Ascending aorta (tissue), 2 donors: ENCODE measurements at regions of chr6 and their contacts with region 1.

Region 1: DNA sequence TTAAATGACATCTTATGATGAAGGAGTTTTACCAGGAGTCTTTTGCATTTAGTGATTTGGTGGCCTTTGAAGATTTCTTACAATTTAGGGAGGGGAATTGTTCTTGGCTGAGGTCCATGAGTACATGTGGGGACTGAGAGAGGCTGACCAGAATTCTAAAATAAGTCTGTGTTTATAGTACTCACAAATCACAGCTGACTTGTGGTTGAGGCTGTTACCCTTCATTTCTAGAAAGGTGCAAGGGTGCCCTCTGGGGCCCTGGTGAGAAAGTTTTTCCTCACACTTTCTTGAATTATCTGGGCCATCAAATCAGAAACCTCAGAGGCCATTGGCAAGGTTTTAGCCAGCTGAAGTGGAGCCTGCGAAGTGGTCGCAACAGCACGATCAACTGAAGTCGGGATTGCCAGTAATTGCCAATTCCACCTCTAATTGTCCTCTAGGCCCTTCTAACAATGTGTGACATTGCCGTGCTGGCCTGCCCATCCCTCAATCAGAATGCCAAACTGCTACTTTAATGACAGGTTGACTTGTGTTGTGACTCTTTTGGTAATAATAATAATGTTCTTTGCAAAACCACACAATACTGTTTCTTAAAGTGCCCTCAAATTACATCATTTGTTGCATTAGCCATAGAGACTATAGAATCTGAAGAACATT is 221.6 kb downstream of the OGFRL1 start:
- DNase-seq: peak in 1 of 2 donors; percentile 79
- H3K4me3 ChIP-seq: no peak overlapping the region
- H3K27ac ChIP-seq: peak overlapping the region in 1 of 2 donors; percentile 51
- H3K4me1 ChIP-seq: peaks cover 0 to 11% of the 10 kb centered on the region in 2 donors
- H3K27me3 ChIP-seq: no peaks in the 10 kb centered on the region
- CTCF ChIP-seq: peak; percentile 64 to 82 (median 81)

Region 2: GRCh38 chr6:71190809-71191208 is 319.4 kb before region 1 on chr6:
- intact Hi-C with region 1: loop called (anchors 2 kb)
- DNase-seq: no peak
- H3K4me3 ChIP-seq: no peak overlapping the region
- H3K27ac ChIP-seq: no peak overlapping the region
- H3K4me1 ChIP-seq: no peaks in the 10 kb centered on the region
- H3K27me3 ChIP-seq: no peaks in the 10 kb centered on the region
- CTCF ChIP-seq: peak in 1 of 3 experiments; percentile 28

Region 3: DNA sequence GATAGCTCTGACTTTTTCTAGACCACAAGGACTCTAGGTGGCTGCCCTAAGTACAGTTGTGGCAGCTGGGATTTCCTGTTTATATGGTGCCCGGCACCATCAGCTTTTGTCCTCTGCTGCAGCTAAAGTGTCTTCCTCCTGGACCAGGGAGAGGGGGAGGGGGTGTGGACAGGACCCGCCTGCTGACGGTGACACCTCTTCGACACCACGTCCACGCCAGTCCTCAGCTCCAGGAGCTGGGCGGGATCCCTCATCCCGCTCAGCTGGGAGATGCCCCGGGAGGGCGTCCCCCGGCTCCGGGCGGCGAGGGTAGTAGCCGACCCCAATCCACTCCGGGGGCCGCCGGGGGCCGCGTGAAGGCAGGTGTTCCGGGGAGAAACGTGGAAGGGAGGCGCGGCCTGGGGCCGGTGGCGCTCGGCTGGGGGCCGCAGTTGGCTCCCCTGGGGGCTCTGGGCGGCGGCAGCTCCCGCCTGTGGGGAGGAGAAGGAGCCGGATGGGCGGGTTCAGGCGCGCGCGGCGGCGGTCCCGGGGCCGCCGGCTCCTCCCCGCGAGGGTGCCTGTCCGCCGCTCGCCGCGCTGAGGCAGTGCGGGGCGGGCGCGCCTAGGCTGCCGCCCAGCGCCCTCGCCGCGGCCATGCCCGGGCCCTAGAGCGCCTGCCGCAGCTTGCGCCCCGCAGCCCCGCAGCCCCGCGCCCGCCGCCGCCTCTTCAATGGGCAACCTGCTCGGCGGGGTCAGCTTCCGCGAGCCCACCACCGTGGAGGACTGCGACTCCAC is 221.8 kb before region 1 on chr6 and contains the start of gene OGFRL1:
- intact Hi-C with region 1: loop called (anchors 5 kb)
- DNase-seq: peak; percentile 33 to 84
- H3K4me3 ChIP-seq: peak within 1 kb of the TSS; percentile 96 to 99
- H3K27ac ChIP-seq: peak within 1 kb of the TSS; percentile 95 to 98
- H3K4me1 ChIP-seq: peaks cover 0 to 13% of the 10 kb centered on the region in 2 donors
- H3K27me3 ChIP-seq: no peaks in the 10 kb centered on the region
- CTCF ChIP-seq: peak in 1 of 3 experiments; percentile 37
- total RNA-seq, gene OGFRL1: 14.6 TPM

Region 4: DNA sequence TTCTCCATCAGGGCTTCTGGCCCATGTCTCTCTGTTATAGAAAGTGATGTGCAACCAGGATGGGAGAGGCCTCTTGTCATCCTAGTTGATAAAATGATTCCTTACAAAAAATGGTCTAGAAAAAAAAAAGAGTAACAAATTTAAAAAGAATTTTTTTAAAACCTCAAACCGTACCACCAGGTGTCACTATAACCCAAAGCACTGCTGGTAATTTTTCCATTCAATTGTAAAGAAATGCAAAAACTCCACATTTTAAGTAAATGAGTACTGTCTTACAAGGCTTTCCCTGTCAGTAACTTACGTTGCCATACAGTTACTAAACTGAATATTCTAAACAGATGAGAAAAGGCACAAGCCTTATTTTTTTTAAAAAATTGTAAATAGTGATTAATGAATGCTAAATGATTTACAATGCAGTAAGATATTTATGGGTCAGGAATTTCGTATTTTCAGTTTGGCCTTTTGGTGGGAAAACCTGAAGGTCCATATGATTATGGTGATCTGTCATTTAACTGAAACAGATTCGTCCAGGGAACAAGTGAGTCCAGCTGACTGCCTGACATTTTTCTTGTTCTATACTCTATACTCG is 126.2 kb before region 1 on chr6:
- intact Hi-C with region 1: loop called (anchors 1 kb)
- DNase-seq: no peak
- H3K4me3 ChIP-seq: no peak overlapping the region
- H3K27ac ChIP-seq: no peak overlapping the region
- H3K4me1 ChIP-seq: peaks cover 0 to 4% of the 10 kb centered on the region in 2 donors
- H3K27me3 ChIP-seq: no peaks in the 10 kb centered on the region
- CTCF ChIP-seq: peak; percentile 47 to 78 (median 52)